Natural killer cell (primary cell): ENCODE measurements at regions of chr5 and their contacts with region 1.

Region 1: GRCh38 chr5:131164191-131165118 is 601 bp downstream of the HINT1 start:
- DNase-seq: peak; percentile 68 to 82
- ATAC-seq: peak; percentile 67 to 83 (median 79)
- H3K4me3 ChIP-seq: peak overlapping the region; percentile 82
- H3K4me3 Mint-ChIP-seq: peak overlapping the region; percentile 95
- H3K27ac ChIP-seq: peak overlapping the region; percentile 91
- H3K27ac Mint-ChIP-seq: peak overlapping the region; percentile 92 to 93
- H3K4me1 ChIP-seq: peaks cover 8% of the 10 kb centered on the region
- H3K4me1 Mint-ChIP-seq: peaks cover 28 to 35% of the 10 kb centered on the region in 2 donors
- H3K27me3 ChIP-seq: no peaks in the 10 kb centered on the region
- H3K27me3 Mint-ChIP-seq: no peaks in the 10 kb centered on the region
- CTCF ChIP-seq: no peak

Region 2: GRCh38 chr5:130871346-130872086 is 292.9 kb before region 1 on chr5:
- intact Hi-C with region 1: no loop called
- DNase-seq: peak; percentile 18 to 75
- ATAC-seq: peak in 2 of 3 donors; percentile 59 to 62
- H3K4me3 ChIP-seq: no peak overlapping the region
- H3K4me3 Mint-ChIP-seq: no peak overlapping the region
- H3K27ac ChIP-seq: no peak overlapping the region
- H3K27ac Mint-ChIP-seq: no peak overlapping the region
- H3K4me1 ChIP-seq: no peaks in the 10 kb centered on the region
- H3K4me1 Mint-ChIP-seq: no peaks in the 10 kb centered on the region
- H3K27me3 ChIP-seq: no peaks in the 10 kb centered on the region
- H3K27me3 Mint-ChIP-seq: peaks cover 0 to 4% of the 10 kb centered on the region in 2 donors
- CTCF ChIP-seq: peak; percentile 70

Region 3: GRCh38 chr5:131417240-131417869 is 252.9 kb after region 1 on chr5:
- intact Hi-C with region 1: loop called (anchors 1 kb)
- DNase-seq: peak; percentile 70 to 92
- ATAC-seq: peak; percentile 74 to 79 (median 76)
- H3K4me3 ChIP-seq: no peak overlapping the region
- H3K4me3 Mint-ChIP-seq: no peak overlapping the region
- H3K27ac ChIP-seq: no peak overlapping the region
- H3K27ac Mint-ChIP-seq: peak overlapping the region; percentile 58 to 71
- H3K4me1 ChIP-seq: peaks cover 3% of the 10 kb centered on the region
- H3K4me1 Mint-ChIP-seq: peaks cover 20 to 22% of the 10 kb centered on the region in 2 donors
- H3K27me3 ChIP-seq: no peaks in the 10 kb centered on the region
- H3K27me3 Mint-ChIP-seq: no peaks in the 10 kb centered on the region
- CTCF ChIP-seq: peak; percentile 96